ENCODE measurements at regions of chr13 and their contacts with region 1.

Region 1: DNA sequence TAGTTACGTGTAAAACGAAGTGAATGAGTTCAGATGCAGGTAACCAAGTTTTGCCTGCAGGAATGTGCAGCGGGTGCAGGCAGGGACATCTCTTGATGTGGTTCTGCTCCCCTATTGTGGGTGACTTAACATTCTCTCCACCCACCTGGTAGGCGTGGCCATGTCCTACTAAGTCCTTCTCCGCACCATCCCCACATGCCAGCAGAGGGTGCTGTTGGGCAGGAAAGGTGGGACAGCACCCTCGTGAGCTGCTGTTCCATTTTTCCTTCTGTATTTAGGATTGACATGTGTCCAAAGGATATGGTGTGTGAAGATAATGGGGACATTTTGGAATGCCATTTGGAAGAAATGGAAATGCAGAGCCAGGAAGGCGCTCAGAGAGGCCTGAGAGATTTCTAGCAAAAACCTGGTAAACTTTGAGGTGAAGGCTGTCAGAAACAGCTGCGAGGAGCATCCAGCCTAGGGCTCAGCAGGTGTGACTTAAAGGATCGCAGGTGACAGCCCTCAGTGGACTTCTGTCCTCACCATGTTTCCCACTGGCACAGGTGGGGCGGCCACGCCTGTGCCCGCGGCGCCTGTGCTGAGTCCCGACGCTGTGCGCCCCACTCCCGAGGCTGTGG is 26.2 kb upstream of the MCF2L start:
- DNase-seq: peak; percentile 97
- H3K4me3 Mint-ChIP-seq: peak overlapping the region; percentile 80
- H3K27ac Mint-ChIP-seq: no peak overlapping the region
- H3K4me1 Mint-ChIP-seq: peaks cover 7% of the 10 kb centered on the region
- H3K27me3 Mint-ChIP-seq: peaks cover 78% of the 10 kb centered on the region

Region 2: GRCh38 chr13:113029487-113030258 is 86.9 kb after region 1 on chr13:
- CTCF ChIA-PET with region 1: interaction called, 26 read pairs
- DNase-seq: peak; percentile 66
- H3K4me3 Mint-ChIP-seq: no peak overlapping the region
- H3K27ac Mint-ChIP-seq: no peak overlapping the region
- H3K4me1 Mint-ChIP-seq: no peaks in the 10 kb centered on the region
- H3K27me3 Mint-ChIP-seq: no peaks in the 10 kb centered on the region

Region 3: GRCh38 chr13:113393563-113394338 is 451.0 kb after region 1 on chr13:
- CTCF ChIA-PET with region 1: interaction called, 13 read pairs
- DNase-seq: peak; percentile 88
- H3K4me3 Mint-ChIP-seq: peak overlapping the region; percentile 83
- H3K27ac Mint-ChIP-seq: peak overlapping the region; percentile 64
- H3K4me1 Mint-ChIP-seq: peaks cover 7% of the 10 kb centered on the region
- H3K27me3 Mint-ChIP-seq: peaks cover 26% of the 10 kb centered on the region